ENCODE measurements at regions of chr3 and their contacts with region 1.

Region 1: GRCh38 chr3:123201566-123202427 is at the start of gene SEC22A:
- DNase-seq: peak; percentile 86 to 99 (median 96)
- ATAC-seq: peak; percentile 94 to 99 (median 98)
- H3K4me3 ChIP-seq: peak within 1 kb of the TSS; percentile 76 to 91
- H3K4me3 Mint-ChIP-seq: peak within 1 kb of the TSS; percentile 84 to 92 (median 92)
- H3K27ac ChIP-seq: peak within 1 kb of the TSS; percentile 98
- H3K27ac Mint-ChIP-seq: peak within 1 kb of the TSS; percentile 97 to 98
- H3K4me1 ChIP-seq: peaks cover 9 to 18% of the 10 kb centered on the region in 2 experiments
- H3K4me1 Mint-ChIP-seq: peaks cover 25 to 32% (median 28%) of the 10 kb centered on the region in 3 donors
- H3K27me3 ChIP-seq: no peaks in the 10 kb centered on the region
- H3K27me3 Mint-ChIP-seq: no peaks in the 10 kb centered on the region
- total RNA-seq, gene SEC22A: 14.4 to 22.5 (median 18.7) TPM

Region 2: DNA sequence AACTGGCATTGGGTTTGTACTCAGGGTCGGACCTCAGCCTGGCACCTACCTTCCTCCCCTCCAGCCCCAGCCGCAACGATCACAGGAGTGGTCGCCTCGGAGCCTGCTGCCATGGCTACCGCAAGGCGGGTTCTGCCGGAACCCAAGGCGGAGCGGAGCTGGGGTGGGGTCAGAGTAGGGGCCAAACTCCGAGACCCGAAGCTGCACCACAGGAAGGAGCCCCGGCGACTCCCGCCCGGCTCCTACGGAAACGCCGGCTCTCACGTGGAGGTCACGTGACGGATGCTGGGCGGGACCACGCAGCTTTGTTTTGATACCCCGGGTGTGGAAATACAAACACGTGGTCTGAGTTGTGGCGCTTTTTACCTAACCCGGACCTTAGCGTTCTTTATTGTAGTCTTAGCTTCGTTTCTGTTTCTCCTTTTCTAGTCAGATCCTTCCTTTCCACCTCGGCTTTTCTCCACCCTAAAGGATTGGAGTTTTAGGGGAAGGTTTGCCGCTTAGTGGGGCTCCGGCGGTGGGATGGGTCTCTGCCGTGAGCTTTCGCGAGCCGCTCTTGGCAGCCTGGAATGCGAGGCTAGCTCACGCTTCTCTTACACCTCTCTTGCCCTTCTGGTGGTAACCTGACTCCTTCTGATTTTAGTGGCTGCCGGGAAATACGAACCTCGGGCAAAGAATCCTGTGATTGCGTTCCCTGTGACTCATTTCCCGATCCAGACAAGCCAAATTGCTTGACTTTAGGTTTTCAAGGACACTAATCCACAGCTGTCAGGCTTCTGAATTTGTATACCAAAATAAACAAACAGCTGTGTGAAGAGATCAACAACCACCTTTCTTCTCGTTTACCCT is 408.0 kb before region 1 on chr3 and contains the start of gene HSPBAP1:
- CTCF ChIA-PET with region 1: interaction called in 1 of 2 experiments, 3 read pairs
- POLR2A ChIA-PET with region 1: interaction called in 1 of 2 experiments, 11 read pairs
- DNase-seq: peak; percentile 80 to 94 (median 87)
- ATAC-seq: peak; percentile 69 to 79 (median 76)
- H3K4me3 ChIP-seq: peak within 1 kb of the TSS; percentile 64 to 76
- H3K4me3 Mint-ChIP-seq: no peak within 1 kb of the TSS
- H3K27ac ChIP-seq: peak within 1 kb of the TSS; percentile 83
- H3K27ac Mint-ChIP-seq: peak within 1 kb of the TSS in 1 of 2 donors; percentile 96
- H3K4me1 ChIP-seq: peaks cover 23 to 29% of the 10 kb centered on the region in 2 experiments
- H3K4me1 Mint-ChIP-seq: peaks cover 29 to 41% (median 30%) of the 10 kb centered on the region in 3 donors
- H3K27me3 ChIP-seq: no peaks in the 10 kb centered on the region
- H3K27me3 Mint-ChIP-seq: no peaks in the 10 kb centered on the region
- total RNA-seq, gene HSPBAP1: 17.7 to 29.5 (median 22.9) TPM

Region 3: DNA sequence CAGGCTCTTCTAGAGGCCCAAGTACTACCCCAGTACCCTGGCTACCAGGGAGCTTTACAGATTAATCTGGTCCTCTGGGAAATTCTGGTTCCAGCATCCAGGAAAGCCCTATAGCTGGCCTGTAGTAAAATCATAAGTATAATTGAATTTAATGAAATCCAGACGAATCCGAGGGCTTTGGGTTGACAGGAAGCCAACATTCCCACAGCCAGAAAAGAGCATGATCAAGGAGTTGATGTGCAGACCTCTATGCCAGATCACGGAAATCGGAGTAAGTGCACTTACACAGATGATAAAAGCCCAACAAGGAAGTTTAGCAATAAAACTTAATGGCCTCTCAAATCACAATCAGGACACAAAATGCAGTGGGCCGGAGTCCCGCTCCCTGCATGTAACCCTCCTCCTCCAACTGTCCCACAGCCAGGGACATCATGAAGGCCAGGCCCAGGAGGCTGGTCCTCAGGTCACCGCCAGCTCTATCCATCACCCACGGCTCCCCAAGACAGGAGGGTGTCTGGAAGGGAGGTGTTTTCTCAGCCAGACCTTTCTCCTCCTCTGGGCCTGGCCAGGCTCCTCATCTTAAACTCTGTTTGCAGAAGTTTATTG is 62.9 kb before region 1 on chr3:
- CTCF ChIA-PET with region 1: no interaction called
- POLR2A ChIA-PET with region 1: no interaction called
- DNase-seq: no peak
- ATAC-seq: no peak
- H3K4me3 ChIP-seq: no peak overlapping the region
- H3K4me3 Mint-ChIP-seq: no peak overlapping the region
- H3K27ac ChIP-seq: no peak overlapping the region
- H3K27ac Mint-ChIP-seq: no peak overlapping the region
- H3K4me1 ChIP-seq: no peaks in the 10 kb centered on the region
- H3K4me1 Mint-ChIP-seq: no peaks in the 10 kb centered on the region
- H3K27me3 ChIP-seq: no peaks in the 10 kb centered on the region
- H3K27me3 Mint-ChIP-seq: no peaks in the 10 kb centered on the region

Region 4: DNA sequence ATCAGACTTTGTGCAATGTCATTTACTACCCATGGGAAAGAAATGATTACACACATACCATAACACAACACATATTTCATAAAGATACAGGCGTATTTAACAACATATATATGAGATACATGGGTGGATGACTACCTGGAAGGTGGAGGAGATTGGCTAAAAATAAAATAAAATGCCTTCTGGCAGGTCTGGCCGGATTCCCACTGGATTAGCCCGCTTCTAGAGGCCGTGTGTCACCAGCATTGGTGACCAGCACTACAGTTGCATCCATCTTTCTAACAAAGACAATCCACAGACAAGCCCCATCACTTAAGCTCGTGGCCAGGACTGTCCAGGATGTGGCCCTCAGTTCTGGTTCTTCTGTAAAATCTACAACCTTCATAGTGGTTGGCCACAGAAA is 21.0 kb before region 1 on chr3:
- CTCF ChIA-PET with region 1: no interaction called
- POLR2A ChIA-PET with region 1: no interaction called
- DNase-seq: no peak
- ATAC-seq: no peak
- H3K4me3 ChIP-seq: no peak overlapping the region
- H3K4me3 Mint-ChIP-seq: no peak overlapping the region
- H3K27ac ChIP-seq: no peak overlapping the region
- H3K27ac Mint-ChIP-seq: no peak overlapping the region
- H3K4me1 ChIP-seq: no peaks in the 10 kb centered on the region
- H3K4me1 Mint-ChIP-seq: no peaks in the 10 kb centered on the region
- H3K27me3 ChIP-seq: no peaks in the 10 kb centered on the region
- H3K27me3 Mint-ChIP-seq: no peaks in the 10 kb centered on the region

Region 5: DNA sequence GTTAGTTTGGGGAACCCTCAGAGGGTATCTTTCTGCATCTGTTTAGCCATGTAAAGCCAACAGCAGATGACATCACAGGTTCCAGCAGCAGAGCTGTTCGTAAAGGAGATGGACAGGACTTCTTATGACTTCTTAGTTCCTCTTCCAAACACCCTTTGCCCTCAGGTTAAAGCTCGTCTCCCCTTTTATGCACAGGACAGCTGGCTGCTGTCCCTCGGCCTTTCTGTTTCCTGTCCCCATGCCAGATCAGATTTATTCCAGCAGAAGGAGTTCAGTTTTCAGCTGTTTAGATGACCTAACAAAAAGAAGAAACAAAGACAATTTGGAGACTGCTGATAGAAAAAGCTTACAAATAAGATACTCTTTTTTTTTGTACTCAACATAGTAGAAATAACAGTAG is 45.1 kb after region 1 on chr3:
- CTCF ChIA-PET with region 1: no interaction called
- POLR2A ChIA-PET with region 1: interaction called in 1 of 2 experiments, 12 read pairs
- DNase-seq: no peak
- ATAC-seq: no peak
- H3K4me3 ChIP-seq: no peak overlapping the region
- H3K4me3 Mint-ChIP-seq: no peak overlapping the region
- H3K27ac ChIP-seq: no peak overlapping the region
- H3K27ac Mint-ChIP-seq: no peak overlapping the region
- H3K4me1 ChIP-seq: no peaks in the 10 kb centered on the region
- H3K4me1 Mint-ChIP-seq: peaks cover 12 to 25% (median 18%) of the 10 kb centered on the region in 3 donors
- H3K27me3 ChIP-seq: no peaks in the 10 kb centered on the region
- H3K27me3 Mint-ChIP-seq: no peaks in the 10 kb centered on the region